ENCODE measurements at regions of chr4 and their contacts with region 1.

Region 1: DNA sequence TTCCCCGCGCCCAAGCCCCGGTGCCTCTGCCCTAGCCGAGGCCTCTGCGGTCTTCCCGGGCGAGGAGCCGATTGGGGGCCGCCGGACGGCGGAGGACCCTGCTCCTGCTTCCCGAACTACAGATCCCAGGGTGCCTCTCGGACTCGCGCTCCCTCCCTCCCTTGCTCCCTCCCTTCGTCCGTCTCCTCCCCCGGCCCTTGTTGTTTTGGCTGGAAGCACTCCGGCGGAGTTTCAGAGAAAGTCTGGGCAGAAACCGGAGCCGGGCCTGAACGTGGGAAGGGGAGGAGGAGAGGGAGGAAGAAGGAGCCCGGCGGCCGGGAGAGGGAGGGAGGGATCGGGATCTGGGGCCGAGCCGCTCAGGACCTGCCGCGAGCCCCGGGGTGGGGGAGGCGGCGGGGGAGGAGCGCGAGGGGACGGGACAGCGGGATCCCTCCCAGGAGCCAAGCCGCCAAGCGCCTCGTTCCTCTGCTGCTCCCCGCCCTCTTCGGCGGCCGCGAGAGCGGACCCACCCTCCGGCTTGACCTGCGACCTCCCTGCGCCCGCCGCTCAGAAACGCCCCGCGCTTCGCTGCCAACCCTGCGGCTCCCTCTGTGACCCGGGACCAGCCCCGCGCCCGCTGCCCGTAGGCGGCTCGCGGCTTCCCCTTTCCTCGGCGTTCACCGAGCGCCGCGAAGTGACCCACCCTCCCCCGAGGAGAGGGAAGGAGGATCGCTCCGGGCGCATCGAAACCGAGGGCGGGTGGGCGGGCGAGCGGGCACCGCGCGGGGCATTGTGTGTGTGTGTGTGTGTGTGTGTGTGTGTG is 496 bp upstream of the GAB1 start:
- DNase-seq: peak; percentile 94
- ATAC-seq: peak; percentile 94

Region 2: GRCh38 chr4:143224255-143224654 is 111.9 kb before region 1 on chr4:
- intact Hi-C with region 1: loop called (anchors 5 kb)
- DNase-seq: no peak
- ATAC-seq: peak; percentile 74

Region 3: GRCh38 chr4:143375313-143376073 is 39.3 kb after region 1 on chr4:
- intact Hi-C with region 1: loop called (anchors 2 kb)
- DNase-seq: no peak
- ATAC-seq: peak; percentile 70

Region 4: GRCh38 chr4:143455211-143455610 is 119.0 kb after region 1 on chr4:
- intact Hi-C with region 1: loop called (anchors 5 kb)
- DNase-seq: no peak
- ATAC-seq: no peak

Region 5: GRCh38 chr4:143768007-143768591 is 431.9 kb after region 1 on chr4:
- intact Hi-C with region 1: no loop called
- DNase-seq: no peak
- ATAC-seq: no peak

Measured in Right ventricle myocardium inferior (tissue), 1 donor.